Right cardiac atrium (tissue), 5 donors: ENCODE measurements at regions of chr1 and their contacts with region 1.

Region 1: DNA sequence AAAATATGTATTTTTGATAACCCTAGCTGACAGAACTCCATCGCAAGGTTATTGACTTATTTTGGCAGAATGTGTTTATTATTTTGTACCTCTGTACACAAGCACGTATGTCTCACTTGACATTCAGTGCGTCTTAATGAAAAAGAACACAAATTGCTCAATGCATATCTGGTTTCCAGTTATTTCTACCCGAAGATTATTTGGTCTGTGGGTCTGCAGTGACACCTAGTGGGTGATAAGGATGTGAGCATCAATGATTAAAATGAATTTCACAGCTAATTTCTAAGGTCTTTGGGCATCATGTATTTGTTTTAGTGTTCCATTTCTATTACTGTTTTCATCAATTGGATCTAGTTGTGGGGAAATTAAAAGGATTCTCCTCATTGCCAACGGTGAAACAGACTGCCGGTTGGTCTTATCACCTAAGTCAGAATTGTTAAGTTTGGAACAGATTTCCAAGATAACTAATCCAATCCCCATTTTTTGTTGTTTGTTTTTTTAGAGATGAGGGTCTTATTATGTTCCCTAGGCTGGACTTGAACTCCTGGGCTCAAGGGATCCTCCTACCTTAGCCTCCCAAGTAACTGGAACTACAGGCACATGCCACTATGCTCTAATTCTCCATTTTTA is 13.9 kb downstream of the DDX20 start:
- DNase-seq: no peak
- ATAC-seq: peak; percentile 63 to 67
- H3K4me3 ChIP-seq: no peak overlapping the region
- H3K27ac ChIP-seq: no peak overlapping the region
- H3K4me1 ChIP-seq: no peaks in the 10 kb centered on the region
- H3K27me3 ChIP-seq: no peaks in the 10 kb centered on the region

Region 2: GRCh38 chr1:111227851-111228747 is 541.5 kb before region 1 on chr1:
- intact Hi-C with region 1: loop called in 1 of 4 experiments (anchors 5 kb)
- DNase-seq: peak; percentile 41 to 80 (median 74)
- ATAC-seq: peak; percentile 95 to 98
- H3K4me3 ChIP-seq: no peak overlapping the region
- H3K27ac ChIP-seq: peak overlapping the region; percentile 72
- H3K4me1 ChIP-seq: peaks cover 3% of the 10 kb centered on the region
- H3K27me3 ChIP-seq: no peaks in the 10 kb centered on the region

Region 3: DNA sequence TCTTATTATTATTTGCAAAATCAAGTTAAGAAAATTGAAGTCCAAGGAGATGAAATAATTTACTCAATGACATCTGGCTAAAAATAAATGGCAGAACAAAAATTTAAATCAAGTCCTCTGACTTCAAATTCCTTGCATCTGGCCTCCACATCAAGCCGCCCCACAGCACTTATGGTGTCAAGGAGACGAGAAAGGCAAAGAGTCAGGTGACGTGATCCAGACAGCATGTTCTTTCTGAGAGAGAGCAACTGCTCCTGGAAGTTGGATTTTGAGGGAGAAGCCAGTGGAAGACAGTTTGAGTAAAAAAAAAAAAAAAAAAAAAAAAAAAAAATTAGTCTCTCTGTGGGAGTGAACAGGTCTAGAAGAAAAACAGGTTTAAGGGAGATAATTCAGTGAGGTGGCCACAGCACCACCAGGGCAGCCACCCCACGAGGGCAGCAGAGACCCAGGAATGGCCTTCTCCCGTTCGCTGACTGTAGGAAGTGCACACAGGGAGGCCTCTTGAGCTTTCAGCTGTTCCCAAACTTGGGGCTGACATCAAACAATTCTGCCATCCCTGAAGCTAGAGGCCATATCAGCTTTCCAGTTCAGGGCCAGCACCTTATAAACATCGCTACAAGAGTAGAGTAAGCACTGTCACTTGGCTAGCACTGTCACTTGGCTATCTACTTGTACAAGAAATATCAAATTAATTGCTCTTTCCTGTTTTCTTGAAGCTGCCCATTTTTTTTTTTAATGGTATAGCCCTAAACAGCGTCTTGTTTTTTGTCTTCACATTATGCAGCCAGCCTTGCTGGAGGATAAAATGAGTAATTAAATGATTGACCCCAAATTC is 288.0 kb before region 1 on chr1:
- intact Hi-C with region 1: loop called in 3 of 4 experiments (anchors 5 to 10 kb)
- DNase-seq: peak; percentile 75 to 91 (median 89)
- ATAC-seq: peak; percentile 95
- H3K4me3 ChIP-seq: no peak overlapping the region
- H3K27ac ChIP-seq: no peak overlapping the region
- H3K4me1 ChIP-seq: peaks cover 5% of the 10 kb centered on the region
- H3K27me3 ChIP-seq: no peaks in the 10 kb centered on the region

Region 4: GRCh38 chr1:111489604-111490003 is 280.0 kb before region 1 on chr1:
- intact Hi-C with region 1: loop called in 3 of 4 experiments (anchors 5 to 10 kb)
- DNase-seq: peak in 1 of 3 donors; percentile 37
- ATAC-seq: peak; percentile 82
- H3K4me3 ChIP-seq: no peak overlapping the region
- H3K27ac ChIP-seq: peak overlapping the region; percentile 34
- H3K4me1 ChIP-seq: no peaks in the 10 kb centered on the region
- H3K27me3 ChIP-seq: no peaks in the 10 kb centered on the region

Region 5: GRCh38 chr1:111719674-111720132 is 49.9 kb before region 1 on chr1:
- intact Hi-C with region 1: loop called in 1 of 4 experiments (anchors 10 kb)
- DNase-seq: peak; percentile 76 to 82 (median 78)
- ATAC-seq: peak; percentile 45 to 88
- H3K4me3 ChIP-seq: no peak overlapping the region
- H3K27ac ChIP-seq: peak overlapping the region; percentile 86
- H3K4me1 ChIP-seq: peaks cover 30% of the 10 kb centered on the region
- H3K27me3 ChIP-seq: no peaks in the 10 kb centered on the region